ENCODE measurements at regions of chr5 and their contacts with region 1.

Region 1: GRCh38 chr5:66796305-66797292 is 200.4 kb downstream of the MAST4 start:
- DNase-seq: no peak
- ATAC-seq: 0 out of 2 replicates have a peak, but pooled peaks have one; percentile 69
- H3K4me3 ChIP-seq: no peak overlapping the region
- H3K27ac ChIP-seq: no peak overlapping the region
- H3K4me1 ChIP-seq: no peaks in the 10 kb centered on the region
- H3K27me3 ChIP-seq: peaks cover 3% of the 10 kb centered on the region
- CTCF ChIP-seq: peak; percentile 44

Region 2: GRCh38 chr5:66306105-66306843 is 490.3 kb before region 1 on chr5:
- CTCF ChIA-PET with region 1: no interaction called
- POLR2A ChIA-PET with region 1: no interaction called
- in situ Hi-C with region 1: no loop called
- intact Hi-C with region 1: loop called (anchors 5 kb)
- DNase-seq: peak; percentile 54
- ATAC-seq: peak; percentile 85
- H3K4me3 ChIP-seq: no peak overlapping the region
- H3K27ac ChIP-seq: no peak overlapping the region
- H3K4me1 ChIP-seq: no peaks in the 10 kb centered on the region
- H3K27me3 ChIP-seq: no peaks in the 10 kb centered on the region; the same call in none of the 2 replicates
- CTCF ChIP-seq: peak; percentile 91

Region 3: DNA sequence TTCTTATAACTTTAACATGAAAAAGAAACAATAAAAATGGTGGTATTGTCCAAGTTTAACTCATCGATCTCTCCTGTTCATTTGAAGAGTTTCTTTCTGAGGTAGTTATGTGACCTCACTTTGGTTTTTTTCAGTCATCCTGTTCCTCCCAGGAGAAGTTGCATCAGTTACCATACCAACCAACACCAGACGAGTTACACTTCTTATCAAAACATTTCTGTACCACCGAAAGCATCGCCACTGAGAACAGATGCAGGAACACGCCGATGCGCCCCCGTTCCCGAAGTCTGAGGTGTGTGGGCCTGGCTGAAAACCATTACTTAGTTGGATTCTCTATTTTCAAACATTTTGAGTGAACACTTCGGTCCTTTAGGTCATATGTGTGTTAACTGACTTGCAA is 303.7 kb after region 1 on chr5:
- CTCF ChIA-PET with region 1: no interaction called
- POLR2A ChIA-PET with region 1: no interaction called
- in situ Hi-C with region 1: no loop called
- intact Hi-C with region 1: no loop called
- DNase-seq: no peak
- ATAC-seq: no peak
- H3K4me3 ChIP-seq: no peak overlapping the region
- H3K27ac ChIP-seq: no peak overlapping the region
- H3K4me1 ChIP-seq: no peaks in the 10 kb centered on the region
- H3K27me3 ChIP-seq: no peaks in the 10 kb centered on the region
- CTCF ChIP-seq: no peak